WTC11 (cell line): ENCODE measurements at regions of chr4 and their contacts with region 1.

Region 1: DNA sequence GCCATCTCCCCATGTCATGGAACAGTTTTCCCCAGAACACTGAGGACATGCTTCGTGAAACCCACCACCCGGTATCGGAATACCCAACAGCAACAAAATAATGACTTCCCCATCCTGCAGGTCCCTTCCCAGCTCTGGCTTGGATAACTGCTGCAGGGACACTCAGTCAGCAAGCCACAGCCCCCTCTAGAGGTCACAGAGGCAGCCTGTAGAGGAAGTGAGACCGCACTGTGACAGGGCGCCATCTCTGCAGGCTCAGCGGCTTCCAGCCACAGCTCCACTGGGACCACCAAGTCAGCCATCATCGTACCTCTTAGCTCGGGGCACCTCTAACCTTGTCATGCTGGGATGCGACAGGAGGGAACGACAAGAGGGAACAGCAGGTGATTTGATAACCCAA is 315.9 kb downstream of the LDB2 start:
- DNase-seq: peak; percentile 82
- ATAC-seq: peak; percentile 98
- H3K4me3 Mint-ChIP-seq: no peak overlapping the region
- H3K27ac Mint-ChIP-seq: no peak overlapping the region
- H3K4me1 Mint-ChIP-seq: no peaks in the 10 kb centered on the region
- H3K27me3 Mint-ChIP-seq: no peaks in the 10 kb centered on the region
- CTCF ChIP-seq: peak; percentile 51; the same call in 1 of the 2 replicates

Region 2: GRCh38 chr4:16289897-16290554 is 292.5 kb before region 1 on chr4:
- CTCF ChIA-PET with region 1: interaction called, 10 read pairs
- POLR2A ChIA-PET with region 1: no interaction called
- DNase-seq: no peak
- ATAC-seq: peak; percentile 34; the same call in 1 of the 2 replicates
- H3K4me3 Mint-ChIP-seq: no peak overlapping the region
- H3K27ac Mint-ChIP-seq: no peak overlapping the region
- H3K4me1 Mint-ChIP-seq: peaks cover 20% of the 10 kb centered on the region
- H3K27me3 Mint-ChIP-seq: peaks cover under 1% of the 10 kb centered on the region; the same call in 1 of the 2 replicates
- CTCF ChIP-seq: peak; percentile 58

Region 3: GRCh38 chr4:16598243-16599206 is 16.0 kb after region 1 on chr4:
- CTCF ChIA-PET with region 1: interaction called, 14 read pairs
- POLR2A ChIA-PET with region 1: no interaction called
- DNase-seq: no peak
- ATAC-seq: peak; percentile 16; the same call in 1 of the 2 replicates
- H3K4me3 Mint-ChIP-seq: no peak overlapping the region
- H3K27ac Mint-ChIP-seq: peak overlapping the region; percentile 67
- H3K4me1 Mint-ChIP-seq: peaks cover 25% of the 10 kb centered on the region
- H3K27me3 Mint-ChIP-seq: no peaks in the 10 kb centered on the region
- CTCF ChIP-seq: no peak

Region 4: DNA sequence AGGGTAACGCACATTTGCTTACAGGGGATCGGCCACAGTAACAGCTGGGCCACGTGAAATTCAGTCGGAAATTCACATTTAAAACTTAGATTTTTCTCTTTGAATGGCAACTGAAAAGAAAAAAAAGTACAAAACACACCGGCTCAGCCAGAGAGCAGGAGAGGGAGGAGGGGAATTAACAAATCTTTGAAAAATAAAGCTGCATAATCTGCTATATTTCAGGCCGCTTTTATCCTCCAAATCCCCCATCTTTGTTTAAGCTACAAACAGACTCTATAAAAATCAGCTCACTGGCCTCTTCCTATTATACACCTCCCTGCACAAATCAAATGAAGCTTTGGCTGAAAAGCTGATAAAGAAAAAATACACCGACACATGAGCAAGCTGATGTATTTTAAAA is 146.8 kb after region 1 on chr4:
- CTCF ChIA-PET with region 1: interaction called, 12 read pairs
- POLR2A ChIA-PET with region 1: no interaction called
- DNase-seq: no peak
- ATAC-seq: no peak
- H3K4me3 Mint-ChIP-seq: no peak overlapping the region
- H3K27ac Mint-ChIP-seq: 0 out of 2 replicates have a peak overlapping the region, but pooled peaks have one; percentile 17
- H3K4me1 Mint-ChIP-seq: peaks cover 70% of the 10 kb centered on the region
- H3K27me3 Mint-ChIP-seq: no peaks in the 10 kb centered on the region
- CTCF ChIP-seq: no peak

Region 5: DNA sequence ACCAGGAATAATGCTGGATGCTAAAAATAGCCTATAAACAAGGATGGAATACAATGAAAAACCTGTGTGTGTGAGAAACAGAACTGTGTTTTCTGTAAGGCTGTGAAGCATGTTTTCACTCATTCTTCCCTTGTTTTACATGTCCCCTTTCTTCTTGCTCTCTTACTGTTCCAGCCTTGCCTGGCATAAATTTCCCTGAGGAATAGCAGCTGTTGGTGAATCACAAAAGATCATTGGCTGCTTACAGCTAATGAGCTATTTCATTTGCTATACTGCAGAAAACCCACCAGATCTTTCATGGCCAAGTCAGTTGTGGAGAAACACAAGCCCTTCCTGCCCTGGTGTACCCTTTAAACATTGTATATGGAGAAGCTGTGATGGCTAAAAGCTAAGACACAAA is 224.8 kb after region 1 on chr4:
- CTCF ChIA-PET with region 1: no interaction called
- POLR2A ChIA-PET with region 1: no interaction called
- DNase-seq: no peak
- ATAC-seq: no peak
- H3K4me3 Mint-ChIP-seq: no peak overlapping the region
- H3K27ac Mint-ChIP-seq: peak overlapping the region; percentile 4; the same call in 1 of the 2 replicates
- H3K4me1 Mint-ChIP-seq: peaks cover 24% of the 10 kb centered on the region
- H3K27me3 Mint-ChIP-seq: no peaks in the 10 kb centered on the region
- CTCF ChIP-seq: no peak

Region 6: GRCh38 chr4:17082186-17082585 is 499.7 kb after region 1 on chr4:
- CTCF ChIA-PET with region 1: no interaction called
- POLR2A ChIA-PET with region 1: no interaction called
- DNase-seq: no peak
- ATAC-seq: no peak
- H3K4me3 Mint-ChIP-seq: no peak overlapping the region
- H3K27ac Mint-ChIP-seq: no peak overlapping the region
- H3K4me1 Mint-ChIP-seq: peaks cover 30% of the 10 kb centered on the region
- H3K27me3 Mint-ChIP-seq: peaks cover 3% of the 10 kb centered on the region; the same call in 1 of the 2 replicates
- CTCF ChIP-seq: no peak